ENCODE measurements at regions of chr3 and their contacts with region 1.

Region 1: GRCh38 chr3:29285471-29286071 is 4.7 kb downstream of the RBMS3 start:
- DNase-seq: no peak
- ATAC-seq: no peak
- H3K4me3 ChIP-seq: peak overlapping the region; percentile 45; the same call in 1 of the 2 replicates
- H3K27ac ChIP-seq: peak overlapping the region; percentile 27
- H3K4me1 ChIP-seq: peaks cover 4% of the 10 kb centered on the region; the same call in 1 of the 2 replicates
- H3K27me3 ChIP-seq: no peaks in the 10 kb centered on the region
- CTCF ChIP-seq: no peak
- EP300 ChIP-seq: no peak
- POLR2A ChIP-seq: no peak
- RAD21 ChIP-seq: no peak

Region 2: DNA sequence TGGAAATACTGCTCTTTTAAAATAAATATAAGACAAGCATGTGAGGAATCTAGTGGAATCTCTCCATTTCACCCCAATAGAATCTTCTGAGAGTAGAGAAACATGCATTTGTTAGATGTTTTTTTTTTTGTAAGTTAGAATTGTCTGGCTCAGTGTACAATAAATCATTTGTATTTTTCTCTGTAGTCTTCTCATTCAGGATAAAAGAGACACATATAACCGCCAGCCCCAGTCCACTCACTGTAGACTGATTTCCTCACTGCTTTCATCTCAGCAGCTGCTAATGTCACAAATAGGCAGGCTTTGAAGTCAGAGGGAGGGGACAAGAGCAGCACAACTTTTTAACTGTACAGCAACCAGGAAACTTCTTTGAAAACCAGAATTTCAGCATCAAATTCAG is 144.9 kb before region 1 on chr3:
- CTCF ChIA-PET with region 1: no interaction called
- POLR2A ChIA-PET with region 1: no interaction called
- RAD21 ChIA-PET with region 1: no interaction called
- SMC1A ChIA-PET with region 1: no interaction called
- in situ Hi-C with region 1: no loop called
- intact Hi-C with region 1: no loop called
- DNase-seq: no peak
- ATAC-seq: no peak
- H3K4me3 ChIP-seq: no peak overlapping the region
- H3K27ac ChIP-seq: no peak overlapping the region
- H3K4me1 ChIP-seq: no peaks in the 10 kb centered on the region
- H3K27me3 ChIP-seq: no peaks in the 10 kb centered on the region
- CTCF ChIP-seq: no peak
- EP300 ChIP-seq: no peak
- POLR2A ChIP-seq: no peak
- RAD21 ChIP-seq: no peak

Region 3: GRCh38 chr3:29297998-29298397 is 12.4 kb after region 1 on chr3:
- CTCF ChIA-PET with region 1: interaction called, 9 read pairs
- POLR2A ChIA-PET with region 1: interaction called, 7 read pairs
- RAD21 ChIA-PET with region 1: interaction called, 5 read pairs
- SMC1A ChIA-PET with region 1: interaction called, 34 read pairs
- in situ Hi-C with region 1: no loop called
- intact Hi-C with region 1: no loop called
- DNase-seq: no peak
- ATAC-seq: peak; percentile 64
- H3K4me3 ChIP-seq: no peak overlapping the region
- H3K27ac ChIP-seq: no peak overlapping the region
- H3K4me1 ChIP-seq: no peaks in the 10 kb centered on the region
- H3K27me3 ChIP-seq: no peaks in the 10 kb centered on the region
- CTCF ChIP-seq: no peak
- EP300 ChIP-seq: no peak
- POLR2A ChIP-seq: no peak
- RAD21 ChIP-seq: no peak

Region 4: GRCh38 chr3:29329986-29330890 is 44.7 kb after region 1 on chr3:
- CTCF ChIA-PET with region 1: interaction called, 6 read pairs
- POLR2A ChIA-PET with region 1: interaction called, 7 read pairs
- RAD21 ChIA-PET with region 1: interaction called, 17 read pairs
- SMC1A ChIA-PET with region 1: interaction called, 307 read pairs
- in situ Hi-C with region 1: no loop called
- intact Hi-C with region 1: loop called (anchors 2 kb)
- DNase-seq: no peak
- ATAC-seq: no peak; the same call in 2 of the 3 replicates
- H3K4me3 ChIP-seq: no peak overlapping the region
- H3K27ac ChIP-seq: no peak overlapping the region
- H3K4me1 ChIP-seq: no peaks in the 10 kb centered on the region
- H3K27me3 ChIP-seq: no peaks in the 10 kb centered on the region
- CTCF ChIP-seq: no peak
- EP300 ChIP-seq: no peak
- POLR2A ChIP-seq: no peak
- RAD21 ChIP-seq: no peak

Region 5: DNA sequence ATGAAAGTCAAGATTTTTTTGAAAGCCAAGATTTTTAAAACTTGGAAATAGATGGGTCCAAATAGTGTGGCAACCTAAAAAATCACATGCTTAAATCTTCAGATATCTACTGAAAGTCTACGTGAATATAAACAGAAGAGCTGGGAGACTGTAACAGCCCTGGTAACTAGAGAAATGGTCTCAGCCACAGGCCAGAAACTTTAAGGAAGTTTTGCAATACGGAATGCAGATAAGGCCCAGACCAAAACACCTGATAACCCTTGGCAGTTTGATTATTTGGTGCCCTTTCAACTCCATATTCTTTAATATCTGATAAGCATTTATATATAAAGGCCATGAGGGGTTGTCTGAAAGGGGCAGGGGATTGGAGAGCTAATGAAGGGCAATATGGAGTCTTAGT is 783.5 kb after region 1 on chr3:
- CTCF ChIA-PET with region 1: no interaction called
- POLR2A ChIA-PET with region 1: no interaction called
- RAD21 ChIA-PET with region 1: no interaction called
- SMC1A ChIA-PET with region 1: no interaction called
- in situ Hi-C with region 1: no loop called
- intact Hi-C with region 1: no loop called
- DNase-seq: no peak
- ATAC-seq: no peak
- H3K4me3 ChIP-seq: no peak overlapping the region
- H3K27ac ChIP-seq: no peak overlapping the region
- H3K4me1 ChIP-seq: no peaks in the 10 kb centered on the region
- H3K27me3 ChIP-seq: no peaks in the 10 kb centered on the region
- CTCF ChIP-seq: no peak
- EP300 ChIP-seq: no peak
- POLR2A ChIP-seq: no peak
- RAD21 ChIP-seq: no peak